ENCODE measurements at regions of chr21 and their contacts with region 1.

Region 1: GRCh38 chr21:46184625-46185555 is 631 bp upstream of the SPATC1L start:
- DNase-seq: peak; percentile 75
- ATAC-seq: peak; percentile 82
- H3K4me3 Mint-ChIP-seq: peak overlapping the region; percentile 77
- H3K27ac Mint-ChIP-seq: peak overlapping the region; percentile 63
- H3K4me1 Mint-ChIP-seq: peaks cover 4% of the 10 kb centered on the region
- H3K27me3 Mint-ChIP-seq: no peaks in the 10 kb centered on the region

Region 2: GRCh38 chr21:45923146-45923545 is 261.7 kb before region 1 on chr21:
- CTCF ChIA-PET with region 1: no interaction called
- POLR2A ChIA-PET with region 1: no interaction called
- intact Hi-C with region 1: no loop called
- DNase-seq: peak; percentile 82
- ATAC-seq: peak; percentile 85
- H3K4me3 Mint-ChIP-seq: no peak overlapping the region
- H3K27ac Mint-ChIP-seq: no peak overlapping the region
- H3K4me1 Mint-ChIP-seq: peaks cover 12% of the 10 kb centered on the region
- H3K27me3 Mint-ChIP-seq: no peaks in the 10 kb centered on the region

Region 3: GRCh38 chr21:46000731-46001641 is 183.9 kb before region 1 on chr21:
- CTCF ChIA-PET with region 1: no interaction called
- POLR2A ChIA-PET with region 1: no interaction called
- intact Hi-C with region 1: no loop called
- DNase-seq: peak; percentile 5
- ATAC-seq: no peak
- H3K4me3 Mint-ChIP-seq: no peak overlapping the region
- H3K27ac Mint-ChIP-seq: no peak overlapping the region
- H3K4me1 Mint-ChIP-seq: no peaks in the 10 kb centered on the region
- H3K27me3 Mint-ChIP-seq: no peaks in the 10 kb centered on the region

Region 4: DNA sequence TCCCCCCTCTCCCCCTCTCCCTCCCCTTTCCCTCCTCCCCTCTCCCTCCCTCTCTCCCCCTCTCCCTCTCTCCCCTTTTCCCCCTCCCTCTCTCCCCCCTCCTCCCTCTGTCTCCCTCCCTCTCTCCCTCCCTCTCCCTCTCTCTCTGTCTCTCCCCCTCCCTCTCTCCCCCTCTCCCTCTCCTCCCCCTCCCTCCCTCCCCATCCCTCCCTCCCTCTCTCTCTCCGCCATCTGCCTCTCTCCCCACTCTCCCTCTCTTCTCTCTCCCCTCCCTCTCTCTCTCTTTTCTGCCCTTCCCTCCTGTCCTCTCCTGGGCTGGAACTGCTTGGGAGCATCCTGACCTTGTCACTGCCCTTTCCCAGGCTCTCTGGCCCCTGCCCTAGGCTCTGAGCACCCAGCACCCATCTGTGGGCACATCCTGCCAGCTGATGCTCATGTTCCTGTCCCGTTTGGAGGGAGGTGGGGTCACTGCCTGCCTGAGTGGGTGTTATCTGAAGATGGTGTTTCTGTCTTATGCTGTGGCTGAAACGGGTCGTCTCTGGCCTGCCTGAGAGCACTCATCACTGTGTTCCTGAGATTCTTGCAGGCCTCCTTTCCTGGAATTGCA is 40.3 kb before region 1 on chr21:
- CTCF ChIA-PET with region 1: no interaction called
- POLR2A ChIA-PET with region 1: no interaction called
- intact Hi-C with region 1: loop called in 1 of 2 experiments (anchors 1 kb)
- DNase-seq: peak; percentile 40
- ATAC-seq: no peak
- H3K4me3 Mint-ChIP-seq: no peak overlapping the region
- H3K27ac Mint-ChIP-seq: peak overlapping the region; percentile 34
- H3K4me1 Mint-ChIP-seq: peaks cover 12% of the 10 kb centered on the region
- H3K27me3 Mint-ChIP-seq: no peaks in the 10 kb centered on the region

Region 5: GRCh38 chr21:46285761-46286496 is 101.0 kb after region 1 on chr21 and contains the start of gene YBEY:
- CTCF ChIA-PET with region 1: no interaction called
- POLR2A ChIA-PET with region 1: no interaction called
- intact Hi-C with region 1: loop called in 1 of 2 experiments (anchors 1 kb)
- DNase-seq: peak; percentile 94
- ATAC-seq: peak; percentile 94
- H3K4me3 Mint-ChIP-seq: peak within 1 kb of the TSS; percentile 88
- H3K27ac Mint-ChIP-seq: peak within 1 kb of the TSS; percentile 98
- H3K4me1 Mint-ChIP-seq: peaks cover 52% of the 10 kb centered on the region
- H3K27me3 Mint-ChIP-seq: no peaks in the 10 kb centered on the region
- total RNA-seq, gene YBEY: 16.9 to 20.6 TPM

Measured in activated CD4-positive, alpha-beta T cell treated with anti-CD3 and anti-CD28 coated beads for 36 hours (primary cell).